ENCODE measurements at regions of chr2 and their contacts with region 1.

Region 1: DNA sequence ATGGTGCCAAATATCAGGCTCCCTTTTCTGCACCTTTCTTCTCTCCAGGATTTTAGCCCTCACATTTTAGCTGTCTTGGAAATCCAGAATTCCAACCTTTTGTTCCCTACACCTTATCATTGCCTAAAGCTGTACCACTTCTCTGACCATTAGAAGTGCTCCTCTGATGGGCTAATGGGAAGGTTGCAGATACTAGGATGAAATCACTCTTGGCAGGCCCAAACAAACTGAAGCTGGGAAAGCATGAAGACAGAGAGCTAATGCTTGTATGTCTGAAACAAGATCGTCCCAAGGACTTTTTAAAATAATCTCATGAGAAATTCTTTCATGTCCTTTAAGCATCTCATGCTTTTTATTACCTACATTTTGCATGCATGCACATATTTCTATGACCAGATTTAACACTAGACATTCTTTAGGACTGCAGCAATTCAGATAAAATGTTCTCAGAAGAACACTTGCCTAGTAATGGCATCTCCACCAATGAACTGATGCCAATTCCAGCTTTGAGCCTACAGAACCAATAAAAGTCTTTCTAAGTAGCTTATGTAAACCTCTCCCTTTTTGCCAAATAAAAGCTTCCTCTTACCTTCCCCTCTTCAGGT is 98.4 kb upstream of the OSR1 start:
- DNase-seq: no peak
- H3K4me3 ChIP-seq: no peak overlapping the region
- H3K27ac ChIP-seq: no peak overlapping the region
- H3K4me1 ChIP-seq: no peaks in the 10 kb centered on the region
- H3K27me3 ChIP-seq: no peaks in the 10 kb centered on the region
- CTCF ChIP-seq: no peak
- POLR2A ChIP-seq: no peak

Region 2: GRCh38 chr2:19902216-19902740 is 445.5 kb after region 1 on chr2:
- intact Hi-C with region 1: no loop called
- DNase-seq: no peak
- H3K4me3 ChIP-seq: peak overlapping the region; percentile 61 to 94
- H3K27ac ChIP-seq: peak overlapping the region; percentile 94
- H3K4me1 ChIP-seq: peaks cover 33% of the 10 kb centered on the region
- H3K27me3 ChIP-seq: no peaks in the 10 kb centered on the region
- CTCF ChIP-seq: no peak
- POLR2A ChIP-seq: no peak

Region 3: GRCh38 chr2:20326163-20326780 is 869.5 kb after region 1 on chr2:
- intact Hi-C with region 1: loop called (anchors 10 kb)
- DNase-seq: no peak
- H3K4me3 ChIP-seq: no peak overlapping the region
- H3K27ac ChIP-seq: no peak overlapping the region
- H3K4me1 ChIP-seq: peaks cover 30% of the 10 kb centered on the region
- H3K27me3 ChIP-seq: no peaks in the 10 kb centered on the region
- CTCF ChIP-seq: peak in 2 of 3 experiments; percentile 33 to 51
- POLR2A ChIP-seq: no peak

Measured in vagina (tissue), 2 donors.